ENCODE measurements at regions of chr2 and their contacts with region 1.

Region 1: DNA sequence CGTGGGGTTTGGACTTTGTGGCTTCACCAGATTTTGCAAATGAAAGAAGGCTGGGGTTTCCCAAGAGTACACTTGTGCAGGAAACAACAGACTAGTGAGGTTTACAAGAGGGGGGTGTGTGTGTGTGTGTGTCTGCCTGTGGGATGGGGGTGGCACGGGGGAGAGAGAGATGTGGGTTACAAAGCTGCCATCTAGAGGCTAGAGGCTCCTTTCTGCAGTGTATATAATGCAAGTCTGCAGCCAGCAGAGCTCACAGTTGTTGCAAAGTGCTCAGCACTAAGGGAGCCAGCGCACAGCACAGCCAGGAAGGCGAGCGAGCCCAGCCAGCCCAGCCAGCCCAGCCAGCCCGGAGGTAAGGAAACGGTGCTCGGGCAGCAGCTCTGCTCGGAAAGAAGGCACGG is at the start of gene ACKR3:
- DNase-seq: peak; percentile 63 to 93
- ATAC-seq: peak; percentile 90 to 95 (median 94)
- H3K4me3 ChIP-seq: no peak within 1 kb of the TSS
- H3K4me3 Mint-ChIP-seq: peak within 1 kb of the TSS; percentile 91
- H3K27ac ChIP-seq: peak within 1 kb of the TSS; percentile 8
- H3K27ac Mint-ChIP-seq: peak within 1 kb of the TSS; percentile 81 to 90
- H3K4me1 ChIP-seq: peaks cover 29% of the 10 kb centered on the region
- H3K4me1 Mint-ChIP-seq: peaks cover 30 to 55% of the 10 kb centered on the region in 2 donors
- H3K27me3 ChIP-seq: no peaks in the 10 kb centered on the region
- H3K27me3 Mint-ChIP-seq: no peaks in the 10 kb centered on the region
- CTCF ChIP-seq: peak; percentile 43
- total RNA-seq, gene ACKR3: 4.4 to 5.5 (median 4.6) TPM

Region 2: DNA sequence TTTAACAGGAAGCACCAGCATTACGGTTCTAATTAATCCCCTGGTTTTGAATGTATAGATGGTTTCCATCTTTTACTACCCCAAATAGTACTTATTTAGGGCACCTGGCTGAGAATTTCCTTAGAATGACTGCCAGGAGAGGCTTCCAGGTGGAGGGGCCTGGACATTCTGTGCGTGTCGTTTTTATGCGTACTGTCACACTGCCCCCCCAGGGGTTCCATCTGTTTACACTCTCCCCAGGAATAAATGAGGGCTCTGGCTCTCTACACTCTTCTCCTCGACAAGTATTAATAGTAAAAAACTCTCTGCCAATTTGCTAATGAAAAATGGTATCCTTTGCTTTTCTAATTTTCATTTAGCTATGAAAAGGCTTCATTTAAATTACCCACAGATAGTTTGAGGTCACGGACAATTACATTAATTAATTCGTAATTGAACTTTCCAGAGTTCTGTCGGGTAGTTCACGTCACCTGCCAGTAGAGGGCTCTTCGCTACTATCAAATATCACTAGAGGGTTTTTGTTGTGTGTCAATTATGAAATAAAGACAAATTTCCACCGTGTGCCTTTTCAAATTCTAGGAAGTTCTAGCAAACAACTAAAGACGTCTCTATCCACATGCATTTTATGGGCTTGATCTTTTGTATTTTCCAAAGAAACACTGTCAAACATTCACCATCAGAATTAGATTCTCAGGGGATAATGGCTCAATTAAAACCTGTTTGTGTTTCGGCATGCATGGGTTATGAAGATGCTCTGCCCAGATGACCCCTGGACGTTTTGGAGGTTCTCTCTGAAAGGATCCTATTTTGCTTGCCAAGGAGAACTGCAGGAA is 216.6 kb before region 1 on chr2:
- intact Hi-C with region 1: loop called (anchors 1 kb)
- DNase-seq: peak in 1 of 2 donors; percentile 70
- ATAC-seq: peak in 2 of 3 donors; percentile 63 to 64
- H3K4me3 ChIP-seq: no peak overlapping the region
- H3K4me3 Mint-ChIP-seq: no peak overlapping the region
- H3K27ac ChIP-seq: no peak overlapping the region
- H3K27ac Mint-ChIP-seq: no peak overlapping the region
- H3K4me1 ChIP-seq: no peaks in the 10 kb centered on the region
- H3K4me1 Mint-ChIP-seq: peaks cover 6 to 7% of the 10 kb centered on the region in 2 donors
- H3K27me3 ChIP-seq: peaks cover 2% of the 10 kb centered on the region
- H3K27me3 Mint-ChIP-seq: peaks cover 13 to 21% of the 10 kb centered on the region in 2 donors
- CTCF ChIP-seq: peak; percentile 92

Region 3: GRCh38 chr2:236512902-236513435 is 56.6 kb before region 1 on chr2:
- intact Hi-C with region 1: loop called (anchors 1 kb)
- DNase-seq: peak; percentile 59 to 82
- ATAC-seq: peak; percentile 83 to 99 (median 96)
- H3K4me3 ChIP-seq: no peak overlapping the region
- H3K4me3 Mint-ChIP-seq: no peak overlapping the region
- H3K27ac ChIP-seq: no peak overlapping the region
- H3K27ac Mint-ChIP-seq: no peak overlapping the region
- H3K4me1 ChIP-seq: peaks cover 8% of the 10 kb centered on the region
- H3K4me1 Mint-ChIP-seq: no peaks in the 10 kb centered on the region
- H3K27me3 ChIP-seq: no peaks in the 10 kb centered on the region
- H3K27me3 Mint-ChIP-seq: peaks cover 11 to 16% of the 10 kb centered on the region in 2 donors
- CTCF ChIP-seq: peak; percentile 79

Region 4: GRCh38 chr2:236536727-236537398 is 32.7 kb before region 1 on chr2:
- intact Hi-C with region 1: loop called (anchors 1 kb)
- DNase-seq: peak; percentile 34 to 78
- ATAC-seq: peak; percentile 78 to 87 (median 86)
- H3K4me3 ChIP-seq: peak overlapping the region; percentile 55
- H3K4me3 Mint-ChIP-seq: peak overlapping the region; percentile 95
- H3K27ac ChIP-seq: peak overlapping the region; percentile 74
- H3K27ac Mint-ChIP-seq: peak overlapping the region; percentile 97 to 99
- H3K4me1 ChIP-seq: peaks cover 37% of the 10 kb centered on the region
- H3K4me1 Mint-ChIP-seq: peaks cover 69 to 71% of the 10 kb centered on the region in 2 donors
- H3K27me3 ChIP-seq: no peaks in the 10 kb centered on the region
- H3K27me3 Mint-ChIP-seq: no peaks in the 10 kb centered on the region
- CTCF ChIP-seq: no peak

Region 5: DNA sequence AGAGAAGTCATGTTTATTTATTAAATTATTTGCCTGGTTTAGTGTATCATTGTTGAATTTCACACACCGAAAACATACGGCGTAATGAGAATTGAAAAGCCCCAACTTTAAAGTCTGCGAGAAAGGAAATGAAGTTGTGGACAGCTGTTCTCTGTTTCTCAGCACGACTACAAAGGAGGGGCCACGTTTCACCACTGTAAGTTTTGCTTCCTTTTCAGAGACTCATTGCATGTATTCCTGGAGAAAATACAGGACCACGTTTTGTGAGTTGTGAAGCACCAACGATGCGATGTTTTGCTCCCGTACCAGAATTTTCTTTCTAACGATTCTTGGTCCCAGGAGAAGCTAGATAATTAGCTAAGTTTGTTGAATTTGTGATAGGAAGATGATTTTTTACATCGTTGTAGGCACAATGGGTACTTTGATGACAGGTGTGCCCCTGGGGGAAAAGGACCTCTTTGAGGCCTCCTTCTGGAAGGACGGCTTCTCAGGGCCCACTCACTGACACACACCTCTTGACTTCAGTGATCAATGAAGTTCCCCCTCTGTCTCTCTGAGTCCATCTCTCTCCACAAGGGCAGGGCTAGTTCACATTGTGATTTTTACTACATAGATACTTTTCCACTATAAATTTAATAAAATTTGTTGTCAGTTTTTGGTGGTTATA is 23.6 kb before region 1 on chr2:
- intact Hi-C with region 1: loop called (anchors 2 kb)
- DNase-seq: peak in 1 of 2 donors; percentile 70
- ATAC-seq: peak; percentile 64 to 75 (median 74)
- H3K4me3 ChIP-seq: peak overlapping the region; percentile 2
- H3K4me3 Mint-ChIP-seq: peak overlapping the region; percentile 74
- H3K27ac ChIP-seq: peak overlapping the region; percentile 81
- H3K27ac Mint-ChIP-seq: peak overlapping the region; percentile 89 to 97
- H3K4me1 ChIP-seq: peaks cover 66% of the 10 kb centered on the region
- H3K4me1 Mint-ChIP-seq: peaks cover 82 to 98% of the 10 kb centered on the region in 2 donors
- H3K27me3 ChIP-seq: no peaks in the 10 kb centered on the region
- H3K27me3 Mint-ChIP-seq: no peaks in the 10 kb centered on the region
- CTCF ChIP-seq: no peak

Region 6: GRCh38 chr2:236607451-236608187 is 38.0 kb after region 1 on chr2:
- intact Hi-C with region 1: loop called (anchors 1 kb)
- DNase-seq: peak; percentile 56 to 58
- ATAC-seq: peak; percentile 92 to 97 (median 93)
- H3K4me3 ChIP-seq: no peak overlapping the region
- H3K4me3 Mint-ChIP-seq: peak overlapping the region; percentile 90
- H3K27ac ChIP-seq: no peak overlapping the region
- H3K27ac Mint-ChIP-seq: peak overlapping the region; percentile 74 to 78
- H3K4me1 ChIP-seq: peaks cover 36% of the 10 kb centered on the region
- H3K4me1 Mint-ChIP-seq: peaks cover 42 to 53% of the 10 kb centered on the region in 2 donors
- H3K27me3 ChIP-seq: peaks cover 31% of the 10 kb centered on the region
- H3K27me3 Mint-ChIP-seq: peaks cover 55 to 57% of the 10 kb centered on the region in 2 donors
- CTCF ChIP-seq: peak; percentile 40

Region 7: DNA sequence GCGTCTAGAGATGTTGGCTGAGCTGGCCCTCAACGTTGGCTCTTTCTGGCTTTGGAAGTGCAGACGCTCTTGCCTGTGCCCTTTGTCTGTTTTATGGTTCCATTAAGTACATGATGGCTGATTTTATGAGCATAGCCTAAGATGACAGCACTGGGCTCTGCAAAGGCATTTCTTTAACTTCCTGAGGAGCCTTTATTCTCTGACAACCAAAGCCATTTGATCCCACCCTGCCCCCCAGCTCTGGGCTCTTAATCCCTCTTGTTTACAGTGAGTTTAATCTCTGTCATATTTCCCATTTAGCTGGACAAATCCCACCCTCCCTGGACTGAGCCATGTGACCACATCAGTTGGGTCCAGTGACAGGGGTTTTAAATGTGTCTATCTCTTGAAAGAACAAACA is 195.9 kb after region 1 on chr2:
- intact Hi-C with region 1: no loop called
- DNase-seq: no peak
- ATAC-seq: no peak
- H3K4me3 ChIP-seq: no peak overlapping the region
- H3K4me3 Mint-ChIP-seq: no peak overlapping the region
- H3K27ac ChIP-seq: no peak overlapping the region
- H3K27ac Mint-ChIP-seq: no peak overlapping the region
- H3K4me1 ChIP-seq: no peaks in the 10 kb centered on the region
- H3K4me1 Mint-ChIP-seq: no peaks in the 10 kb centered on the region
- H3K27me3 ChIP-seq: no peaks in the 10 kb centered on the region
- H3K27me3 Mint-ChIP-seq: peaks cover 0 to 34% of the 10 kb centered on the region in 2 donors
- CTCF ChIP-seq: no peak